ENCODE measurements at regions of chr4 and their contacts with region 1.

Region 1: GRCh38 chr4:176340871-176341685 is 21.3 kb downstream of the SPCS3 start:
- DNase-seq: no peak
- H3K4me3 ChIP-seq: no peak overlapping the region
- H3K27ac ChIP-seq: no peak overlapping the region
- H3K4me1 ChIP-seq: peaks cover 21% of the 10 kb centered on the region
- H3K27me3 ChIP-seq: no peaks in the 10 kb centered on the region
- CTCF ChIP-seq: peak in 2 of 3 experiments; percentile 29 to 41
- POLR2A ChIP-seq: no peak

Region 2: DNA sequence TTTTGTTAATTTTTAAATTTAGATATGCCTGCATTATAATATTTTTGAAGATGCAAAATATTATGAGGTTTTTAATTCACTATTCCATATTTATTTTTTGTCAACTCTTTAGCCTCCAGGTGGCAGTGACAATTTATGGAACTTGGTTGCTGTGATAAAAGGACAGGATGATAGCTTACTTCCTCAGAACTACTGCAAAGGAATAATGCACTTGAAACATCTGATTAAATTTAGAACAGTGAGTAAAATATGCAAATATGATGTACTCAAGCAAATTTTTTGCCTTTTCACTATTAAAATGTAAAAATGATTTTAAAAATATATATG is 190.8 kb before region 1 on chr4:
- intact Hi-C with region 1: loop called (anchors 5 kb)
- DNase-seq: no peak
- H3K4me3 ChIP-seq: no peak overlapping the region
- H3K27ac ChIP-seq: no peak overlapping the region
- H3K4me1 ChIP-seq: no peaks in the 10 kb centered on the region
- H3K27me3 ChIP-seq: no peaks in the 10 kb centered on the region
- CTCF ChIP-seq: no peak
- POLR2A ChIP-seq: no peak

Region 3: GRCh38 chr4:176534566-176534965 is 193.5 kb after region 1 on chr4:
- intact Hi-C with region 1: no loop called
- DNase-seq: no peak
- H3K4me3 ChIP-seq: no peak overlapping the region
- H3K27ac ChIP-seq: no peak overlapping the region
- H3K4me1 ChIP-seq: peaks cover 6% of the 10 kb centered on the region
- H3K27me3 ChIP-seq: no peaks in the 10 kb centered on the region
- CTCF ChIP-seq: no peak
- POLR2A ChIP-seq: no peak

Measured in vagina (tissue), 2 donors.